Heart left ventricle (tissue), 16 donors: ENCODE measurements at regions of chr6 and their contacts with region 1.

Region 1: DNA sequence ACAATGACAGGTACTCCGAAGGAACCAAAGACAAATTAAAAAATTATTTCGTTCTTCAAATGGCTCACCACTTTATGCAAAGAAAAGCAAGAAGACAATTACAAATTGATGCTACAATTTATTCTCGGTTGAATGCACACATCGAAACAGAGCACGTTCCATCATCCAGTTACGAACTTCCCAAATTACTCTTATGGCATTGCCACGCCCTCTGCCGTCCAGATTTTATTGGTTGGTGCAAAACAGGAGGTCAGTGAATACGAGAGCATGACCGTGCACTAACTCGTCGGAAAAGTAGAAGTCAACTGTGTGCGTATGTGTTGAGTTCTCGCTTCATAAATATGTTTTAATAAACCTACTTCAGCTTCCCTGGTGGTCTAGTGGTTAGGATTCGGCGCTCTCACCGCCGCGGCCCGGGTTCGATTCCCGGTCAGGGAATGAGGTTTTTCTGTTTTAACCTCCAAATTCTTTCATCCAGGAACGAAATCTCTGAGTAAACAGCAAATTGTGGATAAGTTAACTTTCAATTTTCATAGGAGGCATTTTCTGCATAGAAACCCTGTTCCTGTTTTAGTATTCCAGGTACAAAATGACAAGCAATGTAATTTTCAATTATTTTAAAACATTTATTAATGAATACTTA is 23.2 kb downstream of the ZNF311 start:
- DNase-seq: peak; percentile 70 to 85 (median 76)
- ATAC-seq: peak; percentile 74 to 85 (median 80)
- H3K4me3 ChIP-seq: peak overlapping the region; percentile 52 to 78 (median 68)
- H3K27ac ChIP-seq: peak overlapping the region; percentile 29 to 84 (median 73)
- H3K4me1 ChIP-seq: peaks cover 0 to 38% (median 6%) of the 10 kb centered on the region in 12 donors
- H3K27me3 ChIP-seq: peaks cover 0 to 15% (median 9%) of the 10 kb centered on the region in 9 donors
- CTCF ChIP-seq: peak in 7 of 12 donors; percentile 3 to 40 (median 13)
- POLR2A ChIP-seq: peak in 1 of 2 donors; percentile 10

Region 2: GRCh38 chr6:28606424-28607400 is 375.2 kb before region 1 on chr6:
- intact Hi-C with region 1: no loop called
- DNase-seq: peak in 1 of 5 donors; percentile 30
- ATAC-seq: peak in 1 of 4 donors; percentile 38
- H3K4me3 ChIP-seq: peak overlapping the region in 4 of 12 donors; percentile 5 to 28 (median 14)
- H3K27ac ChIP-seq: no peak overlapping the region
- H3K4me1 ChIP-seq: no peaks in the 10 kb centered on the region
- H3K27me3 ChIP-seq: peaks cover 0 to 65% (median 16%) of the 10 kb centered on the region in 9 donors
- CTCF ChIP-seq: no peak
- POLR2A ChIP-seq: no peak

Region 3: DNA sequence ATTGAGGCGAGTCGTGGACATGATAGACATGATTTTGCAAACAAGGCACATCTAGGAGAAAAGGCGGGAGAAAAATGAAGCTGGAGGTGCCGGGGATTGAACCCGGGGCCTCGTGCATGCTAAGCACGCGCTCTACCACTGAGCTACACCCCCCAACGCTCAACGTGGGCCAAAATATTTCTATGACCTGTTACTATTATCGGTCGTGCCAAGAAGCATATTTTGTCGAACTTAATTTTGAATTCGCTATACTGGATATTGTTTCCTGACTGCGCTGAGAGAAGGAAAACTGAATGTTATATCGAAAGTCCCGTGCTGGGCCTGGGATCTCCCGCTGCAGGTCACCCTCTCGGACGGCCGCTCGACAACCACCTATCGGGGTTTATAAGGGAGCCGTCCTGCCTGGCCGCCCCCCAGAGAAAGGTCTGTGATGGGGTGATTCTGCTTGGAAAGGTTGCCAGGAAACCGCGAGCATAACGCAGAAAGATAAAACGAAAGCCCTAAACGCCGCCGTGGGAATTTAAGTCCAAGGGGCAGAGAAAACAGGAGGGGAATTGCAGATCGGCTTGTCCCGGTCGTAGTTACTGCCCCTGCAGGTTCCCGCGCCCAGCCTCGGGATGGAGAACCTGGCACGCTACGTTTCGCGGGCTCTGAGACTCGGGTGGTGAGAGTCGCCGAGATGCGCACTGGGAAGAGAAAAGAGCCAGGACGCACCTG is 118.2 kb before region 1 on chr6:
- intact Hi-C with region 1: loop called in 6 of 10 experiments (anchors 2 to 10 kb)
- DNase-seq: peak; percentile 55 to 78 (median 59)
- ATAC-seq: peak; percentile 79 to 90 (median 88)
- H3K4me3 ChIP-seq: peak overlapping the region; percentile 42 to 93 (median 78)
- H3K27ac ChIP-seq: peak overlapping the region in 7 of 12 donors; percentile 0 to 77 (median 41)
- H3K4me1 ChIP-seq: peaks cover 0 to 19% (median 7%) of the 10 kb centered on the region in 12 donors
- H3K27me3 ChIP-seq: peaks cover 0 to 10% (median 0%) of the 10 kb centered on the region in 9 donors
- CTCF ChIP-seq: no peak
- POLR2A ChIP-seq: no peak

Region 4: GRCh38 chr6:28895134-28895812 is 86.7 kb before region 1 on chr6:
- intact Hi-C with region 1: loop called in 5 of 10 experiments (anchors 1 to 10 kb)
- DNase-seq: peak; percentile 92 to 94 (median 92)
- ATAC-seq: peak; percentile 88 to 91 (median 90)
- H3K4me3 ChIP-seq: peak overlapping the region; percentile 51 to 87 (median 73)
- H3K27ac ChIP-seq: peak overlapping the region; percentile 80 to 99 (median 96)
- H3K4me1 ChIP-seq: peaks cover 0 to 18% (median 7%) of the 10 kb centered on the region in 12 donors
- H3K27me3 ChIP-seq: no peaks in the 10 kb centered on the region
- CTCF ChIP-seq: no peak
- POLR2A ChIP-seq: peak in 1 of 2 donors; percentile 81

Region 5: GRCh38 chr6:28923318-28924102 is 58.4 kb before region 1 on chr6 and contains the start of gene TRIM27:
- intact Hi-C with region 1: loop called in 4 of 10 experiments (anchors 1 to 10 kb)
- DNase-seq: peak; percentile 93 to 96 (median 95)
- ATAC-seq: peak; percentile 94 to 98 (median 98)
- H3K4me3 ChIP-seq: peak within 1 kb of the TSS; percentile 85 to 100 (median 90)
- H3K27ac ChIP-seq: peak within 1 kb of the TSS; percentile 67 to 98 (median 96)
- H3K4me1 ChIP-seq: peaks cover 0 to 46% (median 19%) of the 10 kb centered on the region in 12 donors
- H3K27me3 ChIP-seq: no peaks in the 10 kb centered on the region
- CTCF ChIP-seq: peak in 2 of 12 donors; percentile 14 to 20
- POLR2A ChIP-seq: peak in 1 of 2 donors; percentile 91
- total RNA-seq, gene TRIM27: 14.7 to 37.7 (median 19.8) TPM

Region 6: GRCh38 chr6:28940858-28941680 is 40.9 kb before region 1 on chr6:
- intact Hi-C with region 1: loop called (anchors 1 to 5 kb)
- DNase-seq: peak in 4 of 5 donors; percentile 72 to 83 (median 80)
- ATAC-seq: peak; percentile 74 to 92 (median 82)
- H3K4me3 ChIP-seq: peak overlapping the region; percentile 42 to 70 (median 64)
- H3K27ac ChIP-seq: peak overlapping the region; percentile 36 to 85 (median 69)
- H3K4me1 ChIP-seq: peaks cover 0 to 33% (median 8%) of the 10 kb centered on the region in 12 donors
- H3K27me3 ChIP-seq: no peaks in the 10 kb centered on the region
- CTCF ChIP-seq: no peak
- POLR2A ChIP-seq: no peak

Region 7: DNA sequence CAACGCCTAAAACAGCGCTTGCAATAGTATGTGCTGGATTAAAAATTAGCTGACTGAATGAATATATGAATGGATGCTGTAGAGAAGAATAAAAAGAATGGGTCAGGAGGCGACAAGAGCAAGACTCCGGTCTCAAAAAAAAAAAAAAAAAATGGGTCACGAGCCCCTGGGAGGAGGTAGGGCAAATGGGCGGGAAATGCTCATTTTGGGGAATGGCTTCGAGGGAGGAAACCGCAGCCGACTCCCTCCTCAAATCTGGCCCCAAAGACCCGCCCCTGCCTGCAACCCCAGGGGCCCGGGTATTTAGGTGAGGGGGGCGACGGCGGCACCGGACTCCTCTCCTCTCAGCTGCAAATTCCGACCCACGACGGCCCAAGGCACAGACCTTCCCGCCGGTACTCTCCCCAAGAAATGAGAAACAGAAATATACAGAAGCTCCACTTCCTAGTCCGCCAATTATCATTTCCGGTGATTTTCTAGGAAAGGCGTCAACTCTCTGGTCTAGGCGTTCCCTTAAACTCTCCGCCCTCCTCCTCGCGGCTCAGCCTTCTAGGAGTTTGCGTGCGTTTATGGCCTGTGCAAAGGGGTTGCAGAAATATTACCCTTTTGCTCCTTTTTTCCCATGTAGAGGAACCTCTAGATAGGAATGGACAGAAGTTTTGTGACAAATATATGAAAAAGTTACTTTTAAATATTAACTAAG is 23.4 kb after region 1 on chr6 and contains the start of gene ZNF311:
- intact Hi-C with region 1: loop called in 2 of 10 experiments (anchors 1 to 2 kb)
- DNase-seq: peak in 4 of 5 donors; percentile 56 to 65 (median 59)
- ATAC-seq: peak; percentile 82 to 96 (median 94)
- H3K4me3 ChIP-seq: peak within 1 kb of the TSS; percentile 28 to 68 (median 57)
- H3K27ac ChIP-seq: peak within 1 kb of the TSS in 11 of 12 donors; percentile 1 to 73 (median 55)
- H3K4me1 ChIP-seq: peaks cover 0 to 6% (median 0%) of the 10 kb centered on the region in 12 donors
- H3K27me3 ChIP-seq: peaks cover 0 to 20% (median 1%) of the 10 kb centered on the region in 9 donors
- CTCF ChIP-seq: no peak
- POLR2A ChIP-seq: peak in 1 of 2 donors; percentile 21
- total RNA-seq, gene ZNF311: 0.07 to 0.84 (median 0.20) TPM in 7 of 9 donors, not detected in the others

Region 8: DNA sequence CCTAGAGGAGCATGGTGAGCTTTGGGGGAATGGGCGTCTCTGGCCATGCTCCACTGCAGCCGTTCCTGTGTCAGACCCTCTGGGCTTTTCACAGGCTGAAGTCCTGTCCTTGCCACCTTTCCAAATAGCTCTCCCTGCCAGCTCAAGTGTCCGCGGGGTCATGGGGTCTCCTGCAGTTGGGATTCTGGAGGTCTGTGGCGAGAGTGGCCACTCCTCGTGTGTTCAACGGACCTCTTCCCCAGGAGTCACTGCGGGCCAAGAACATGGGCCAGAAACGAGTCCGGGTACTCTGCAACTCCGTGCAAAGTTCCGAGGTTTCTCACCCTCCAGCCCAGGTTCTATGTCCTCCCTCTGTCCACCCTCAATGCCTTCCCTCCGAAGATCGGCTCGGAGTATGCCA is 100.5 kb after region 1 on chr6:
- intact Hi-C with region 1: no loop called
- DNase-seq: no peak
- ATAC-seq: no peak
- H3K4me3 ChIP-seq: no peak overlapping the region
- H3K27ac ChIP-seq: no peak overlapping the region
- H3K4me1 ChIP-seq: no peaks in the 10 kb centered on the region
- H3K27me3 ChIP-seq: no peaks in the 10 kb centered on the region
- CTCF ChIP-seq: no peak
- POLR2A ChIP-seq: no peak